Caco-2 (cell line): ENCODE measurements at regions of chrX and their contacts with region 1.

Region 1: GRCh38 chrX:130060122-130061069 is 49.9 kb downstream of the ELF4 start:
- DNase-seq: peak; percentile 77 to 90
- H3K4me3 ChIP-seq: peak overlapping the region; percentile 42
- H3K4me3 Mint-ChIP-seq: peak overlapping the region; percentile 77
- H3K27ac Mint-ChIP-seq: peak overlapping the region; percentile 91
- H3K4me1 ChIP-seq: 0 out of 2 replicates have a peak, but pooled peaks cover 3% of the 10 kb centered on the region
- H3K4me1 Mint-ChIP-seq: peaks cover 9% of the 10 kb centered on the region
- H3K27me3 ChIP-seq: no peaks in the 10 kb centered on the region
- H3K27me3 Mint-ChIP-seq: no peaks in the 10 kb centered on the region
- CTCF ChIP-seq: peak; percentile 72

Region 2: DNA sequence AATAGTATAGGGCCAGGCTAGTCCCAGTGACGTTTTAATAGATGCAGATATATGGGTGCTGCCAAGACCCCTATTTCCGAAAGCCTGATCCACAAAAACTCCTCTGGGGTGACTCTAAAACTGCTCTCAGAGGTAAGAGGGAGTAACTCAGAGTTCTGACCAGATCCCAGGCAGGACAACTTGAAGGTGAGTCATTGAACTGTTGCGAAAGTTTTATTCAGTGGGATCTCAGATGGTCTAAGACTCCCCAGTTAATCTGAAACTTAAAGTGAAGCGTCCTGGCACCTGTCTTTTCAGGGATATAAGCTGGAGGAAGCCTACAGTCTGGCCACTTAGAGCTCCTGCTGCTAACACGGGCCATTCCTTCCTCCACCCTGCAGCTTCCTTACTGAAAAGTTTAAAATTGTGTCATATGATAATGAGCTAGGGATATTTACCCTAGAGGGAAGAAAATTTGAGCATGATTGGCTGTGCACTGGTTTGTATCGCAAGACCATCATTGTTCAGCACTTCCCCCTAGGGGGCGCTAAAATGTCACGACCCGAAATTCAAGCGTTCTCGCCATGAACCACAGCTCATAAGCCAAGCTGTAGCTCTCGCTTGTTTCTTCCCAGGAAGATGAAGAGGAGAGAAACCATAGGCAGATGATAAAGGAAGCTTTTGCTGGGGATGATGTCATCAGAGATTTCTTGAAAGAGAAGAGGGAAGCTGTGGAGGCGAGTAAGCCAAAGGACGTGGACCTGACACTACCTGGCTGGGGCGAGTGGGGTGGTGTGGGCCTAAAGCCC is 134.9 kb before region 1 on chrX:
- CTCF ChIA-PET with region 1: interaction called, 28 read pairs
- POLR2A ChIA-PET with region 1: interaction called, 3 read pairs
- intact Hi-C with region 1: loop called (anchors 1 kb)
- DNase-seq: peak; percentile 57 to 75
- H3K4me3 ChIP-seq: no peak overlapping the region
- H3K4me3 Mint-ChIP-seq: no peak overlapping the region
- H3K27ac Mint-ChIP-seq: no peak overlapping the region
- H3K4me1 ChIP-seq: no peaks in the 10 kb centered on the region
- H3K4me1 Mint-ChIP-seq: no peaks in the 10 kb centered on the region
- H3K27me3 ChIP-seq: no peaks in the 10 kb centered on the region
- H3K27me3 Mint-ChIP-seq: no peaks in the 10 kb centered on the region
- CTCF ChIP-seq: peak; percentile 54 to 59

Region 3: DNA sequence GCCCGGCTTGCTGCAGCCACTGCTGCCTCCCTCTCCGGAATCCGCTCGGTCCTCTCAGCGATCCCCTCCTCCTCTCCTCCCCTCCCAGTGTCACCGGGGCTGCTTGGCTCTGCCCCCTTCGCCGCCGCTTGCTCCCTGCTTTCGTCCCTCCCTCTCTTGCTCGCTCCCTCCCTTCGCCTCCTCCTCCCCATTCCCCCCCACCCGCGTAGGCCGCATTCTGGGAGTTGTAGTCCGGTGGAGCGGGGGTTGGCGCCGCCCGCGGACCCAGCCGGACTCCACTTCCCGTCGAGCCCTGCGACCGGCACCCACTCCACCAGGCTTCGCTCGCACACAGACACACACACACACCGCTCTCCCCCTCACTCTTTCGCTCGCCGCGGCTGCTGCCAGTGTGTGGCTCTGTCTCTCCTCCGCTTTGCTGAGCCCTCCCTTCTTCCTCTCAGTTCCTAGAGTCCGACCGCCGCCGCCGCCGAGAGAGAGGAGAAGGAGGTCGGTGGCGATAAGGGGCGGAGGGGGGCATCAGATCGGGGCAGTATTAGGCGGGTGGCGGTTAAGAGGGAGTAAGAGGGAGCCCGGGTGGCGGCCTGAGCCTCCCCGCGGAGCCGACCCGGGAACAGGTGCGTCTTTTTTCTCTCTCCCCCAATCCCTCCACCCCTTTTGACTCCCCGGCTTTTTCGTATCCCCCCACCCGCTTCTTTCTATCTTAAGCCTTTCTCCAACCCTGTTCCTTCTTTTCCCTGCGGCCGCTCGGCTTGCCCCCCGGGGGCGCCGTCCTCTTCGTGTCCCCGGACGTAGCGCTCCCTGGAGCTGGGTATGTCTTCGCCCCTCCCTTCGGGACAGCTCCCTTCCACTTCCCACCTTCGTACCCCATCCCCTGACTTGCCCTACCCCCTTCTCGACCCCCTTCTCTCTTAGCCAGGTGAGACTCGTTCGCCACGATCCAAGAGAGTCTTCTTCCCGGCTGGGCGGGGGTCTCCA is 77.8 kb before region 1 on chrX and contains the start of gene BCORL1:
- CTCF ChIA-PET with region 1: interaction called, 3 read pairs
- POLR2A ChIA-PET with region 1: interaction called, 3 read pairs
- intact Hi-C with region 1: loop called (anchors 5 kb)
- DNase-seq: peak; percentile 88 to 93
- H3K4me3 ChIP-seq: 0 out of 2 replicates have a peak within 1 kb of the TSS, but pooled peaks have one; percentile 42
- H3K4me3 Mint-ChIP-seq: no peak within 1 kb of the TSS
- H3K27ac Mint-ChIP-seq: no peak within 1 kb of the TSS
- H3K4me1 ChIP-seq: no peaks in the 10 kb centered on the region
- H3K4me1 Mint-ChIP-seq: no peaks in the 10 kb centered on the region
- H3K27me3 ChIP-seq: no peaks in the 10 kb centered on the region
- H3K27me3 Mint-ChIP-seq: no peaks in the 10 kb centered on the region
- CTCF ChIP-seq: peak in 1 of 2 experiments; percentile 9
- total RNA-seq, gene BCORL1: 19.8 and 21.1 TPM in 2 replicates

Region 4: DNA sequence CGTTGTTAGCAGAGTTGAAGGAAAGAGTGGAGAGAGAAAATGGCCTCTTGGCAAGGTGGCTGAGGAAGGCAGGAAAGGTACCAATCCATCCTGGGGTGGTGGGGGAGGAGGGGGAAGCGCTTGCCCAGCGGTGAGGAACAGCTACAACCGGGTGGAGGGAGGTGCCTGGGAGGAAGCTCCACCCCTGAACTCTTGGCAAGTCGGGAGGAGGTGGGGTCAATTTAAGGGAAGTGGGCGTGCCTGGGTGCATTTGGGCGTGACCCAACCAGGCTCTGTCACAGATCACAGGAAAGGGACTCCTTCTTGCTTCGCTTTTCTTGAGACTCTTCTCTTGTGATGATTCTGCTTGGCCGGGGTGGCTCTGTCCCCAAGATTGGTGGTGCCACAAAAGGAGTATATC is 36.3 kb before region 1 on chrX:
- CTCF ChIA-PET with region 1: no interaction called
- POLR2A ChIA-PET with region 1: no interaction called
- intact Hi-C with region 1: no loop called
- DNase-seq: peak; percentile 23 to 35
- H3K4me3 ChIP-seq: no peak overlapping the region
- H3K4me3 Mint-ChIP-seq: no peak overlapping the region
- H3K27ac Mint-ChIP-seq: no peak overlapping the region
- H3K4me1 ChIP-seq: no peaks in the 10 kb centered on the region
- H3K4me1 Mint-ChIP-seq: no peaks in the 10 kb centered on the region
- H3K27me3 ChIP-seq: no peaks in the 10 kb centered on the region
- H3K27me3 Mint-ChIP-seq: no peaks in the 10 kb centered on the region
- CTCF ChIP-seq: no peak

Region 5: GRCh38 chrX:130071611-130072344 is 11.4 kb after region 1 on chrX:
- CTCF ChIA-PET with region 1: interaction called, 22 read pairs
- POLR2A ChIA-PET with region 1: no interaction called
- intact Hi-C with region 1: no loop called
- DNase-seq: peak; percentile 81 to 85
- H3K4me3 ChIP-seq: no peak overlapping the region
- H3K4me3 Mint-ChIP-seq: peak overlapping the region; percentile 62
- H3K27ac Mint-ChIP-seq: peak overlapping the region; percentile 87
- H3K4me1 ChIP-seq: peaks cover 16% of the 10 kb centered on the region
- H3K4me1 Mint-ChIP-seq: peaks cover 6% of the 10 kb centered on the region
- H3K27me3 ChIP-seq: no peaks in the 10 kb centered on the region
- H3K27me3 Mint-ChIP-seq: no peaks in the 10 kb centered on the region
- CTCF ChIP-seq: no peak